CD4-positive, alpha-beta memory T cell (primary cell): ENCODE measurements at regions of chr17 and their contacts with region 1.

Region 1: GRCh38 chr17:69414408-69415274 is at the start of gene MAP2K6:
- DNase-seq: peak; percentile 76 to 87 (median 79)
- H3K4me3 ChIP-seq: peak within 1 kb of the TSS; percentile 13 to 90
- H3K4me3 Mint-ChIP-seq: peak within 1 kb of the TSS in 2 of 8 donors; percentile 4 to 21
- H3K27ac ChIP-seq: peak within 1 kb of the TSS; percentile 17
- H3K27ac Mint-ChIP-seq: peak within 1 kb of the TSS in 1 of 7 donors; percentile 40
- H3K4me1 ChIP-seq: peaks cover 42% of the 10 kb centered on the region
- H3K4me1 Mint-ChIP-seq: peaks cover 6 to 12% (median 7%) of the 10 kb centered on the region in 4 donors
- H3K27me3 ChIP-seq: no peaks in the 10 kb centered on the region
- H3K27me3 Mint-ChIP-seq: no peaks in the 10 kb centered on the region
- total RNA-seq, gene MAP2K6: 16.5 to 18.3 TPM

Region 2: DNA sequence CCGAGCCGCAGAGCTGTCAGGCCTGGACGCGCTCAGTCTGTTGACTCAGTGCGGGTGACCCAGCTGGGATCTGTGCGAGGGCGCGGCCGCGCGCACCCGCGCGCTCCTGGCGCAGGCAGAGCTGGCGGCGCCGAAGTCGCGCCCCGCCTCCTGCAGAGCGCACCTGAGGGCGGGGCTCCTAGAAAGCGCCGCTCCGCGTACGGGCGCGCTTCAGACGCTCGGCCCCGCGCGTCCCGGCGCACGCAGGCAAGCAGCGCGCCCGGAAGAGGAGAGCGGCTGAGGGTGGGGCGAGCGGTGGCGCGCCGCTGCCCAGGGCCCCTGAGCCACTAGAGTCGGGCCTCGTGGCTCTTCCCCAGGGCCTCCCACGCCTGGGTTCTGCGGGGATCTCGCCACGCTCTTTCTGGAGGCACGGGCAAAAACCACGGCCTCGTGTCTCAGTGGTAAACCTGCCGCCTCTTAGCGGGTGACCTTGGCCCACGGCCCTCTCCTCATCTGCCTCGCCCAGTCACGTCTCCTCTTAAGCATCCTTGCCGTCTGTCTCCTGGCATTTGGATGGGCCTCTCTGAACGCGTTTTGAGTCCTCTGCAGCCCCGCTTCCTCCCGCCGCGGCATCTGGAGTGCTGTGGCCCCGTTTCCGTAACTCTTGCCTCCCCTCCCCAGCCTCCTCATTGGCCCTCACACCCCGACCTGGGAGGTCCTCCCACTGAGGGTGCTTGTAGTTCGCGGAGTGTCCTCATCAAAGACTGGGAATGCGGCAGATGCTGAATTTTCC is 87.4 kb before region 1 on chr17 and contains the start of gene ABCA5:
- CTCF ChIA-PET with region 1: interaction called, 7 read pairs
- POLR2A ChIA-PET with region 1: interaction called, 28 read pairs
- intact Hi-C with region 1: loop called (anchors 1 kb)
- DNase-seq: peak; percentile 87 to 94 (median 90)
- H3K4me3 ChIP-seq: peak within 1 kb of the TSS; percentile 57 to 78
- H3K4me3 Mint-ChIP-seq: peak within 1 kb of the TSS; percentile 92 to 100 (median 94)
- H3K27ac ChIP-seq: peak within 1 kb of the TSS; percentile 75
- H3K27ac Mint-ChIP-seq: peak within 1 kb of the TSS; percentile 92 to 99 (median 99)
- H3K4me1 ChIP-seq: peaks cover 20% of the 10 kb centered on the region
- H3K4me1 Mint-ChIP-seq: peaks cover 21 to 46% (median 29%) of the 10 kb centered on the region in 4 donors
- H3K27me3 ChIP-seq: no peaks in the 10 kb centered on the region
- H3K27me3 Mint-ChIP-seq: peaks cover 0 to 2% of the 10 kb centered on the region in 2 donors
- total RNA-seq, gene ABCA5: 43.8 to 45.0 TPM

Region 3: GRCh38 chr17:69344939-69345338 is 69.7 kb before region 1 on chr17:
- CTCF ChIA-PET with region 1: no interaction called
- POLR2A ChIA-PET with region 1: no interaction called
- intact Hi-C with region 1: no loop called
- DNase-seq: no peak
- H3K4me3 ChIP-seq: no peak overlapping the region
- H3K4me3 Mint-ChIP-seq: no peak overlapping the region
- H3K27ac ChIP-seq: no peak overlapping the region
- H3K27ac Mint-ChIP-seq: no peak overlapping the region
- H3K4me1 ChIP-seq: no peaks in the 10 kb centered on the region
- H3K4me1 Mint-ChIP-seq: no peaks in the 10 kb centered on the region
- H3K27me3 ChIP-seq: no peaks in the 10 kb centered on the region
- H3K27me3 Mint-ChIP-seq: peaks cover 6 to 9% of the 10 kb centered on the region in 2 donors

Region 4: DNA sequence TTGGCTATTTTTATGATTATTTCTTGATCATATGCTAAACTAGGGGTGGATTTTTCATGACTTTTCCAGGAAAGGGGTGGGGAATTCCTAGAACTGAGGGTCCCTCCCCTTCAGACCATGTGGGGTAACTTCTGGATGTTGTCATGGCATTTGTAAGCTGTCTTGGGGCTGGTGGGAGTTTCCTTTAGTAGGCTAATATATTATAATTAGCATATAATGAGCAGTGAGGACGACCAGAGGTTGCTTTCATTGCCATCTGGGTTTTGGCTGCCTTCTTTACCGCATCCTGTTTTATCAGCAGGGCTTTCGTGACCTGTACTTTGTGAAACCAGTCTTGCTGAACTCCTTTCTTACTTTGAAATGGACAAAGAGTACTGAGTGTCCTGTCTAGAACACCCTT is 47.3 kb before region 1 on chr17:
- CTCF ChIA-PET with region 1: no interaction called
- POLR2A ChIA-PET with region 1: no interaction called
- intact Hi-C with region 1: no loop called
- DNase-seq: no peak
- H3K4me3 ChIP-seq: no peak overlapping the region
- H3K4me3 Mint-ChIP-seq: no peak overlapping the region
- H3K27ac ChIP-seq: no peak overlapping the region
- H3K27ac Mint-ChIP-seq: peak overlapping the region in 1 of 7 donors; percentile 53
- H3K4me1 ChIP-seq: no peaks in the 10 kb centered on the region
- H3K4me1 Mint-ChIP-seq: no peaks in the 10 kb centered on the region
- H3K27me3 ChIP-seq: no peaks in the 10 kb centered on the region
- H3K27me3 Mint-ChIP-seq: peaks cover 5 to 9% of the 10 kb centered on the region in 2 donors

Region 5: GRCh38 chr17:69462882-69463281 is 48.2 kb after region 1 on chr17:
- CTCF ChIA-PET with region 1: no interaction called
- POLR2A ChIA-PET with region 1: no interaction called
- intact Hi-C with region 1: no loop called
- DNase-seq: no peak
- H3K4me3 ChIP-seq: no peak overlapping the region
- H3K4me3 Mint-ChIP-seq: no peak overlapping the region
- H3K27ac ChIP-seq: no peak overlapping the region
- H3K27ac Mint-ChIP-seq: no peak overlapping the region
- H3K4me1 ChIP-seq: no peaks in the 10 kb centered on the region
- H3K4me1 Mint-ChIP-seq: peaks cover 13 to 28% (median 20%) of the 10 kb centered on the region in 4 donors
- H3K27me3 ChIP-seq: no peaks in the 10 kb centered on the region
- H3K27me3 Mint-ChIP-seq: no peaks in the 10 kb centered on the region